ENCODE measurements at regions of chr21 and their contacts with region 1.

Region 1: GRCh38 chr21:42833439-42833815 is 45.9 kb downstream of the WDR4 start:
- DNase-seq: peak; percentile 74
- ATAC-seq: peak; percentile 81
- H3K4me3 ChIP-seq: no peak overlapping the region
- H3K27ac ChIP-seq: no peak overlapping the region
- H3K4me1 ChIP-seq: no peaks in the 10 kb centered on the region
- H3K27me3 ChIP-seq: no peaks in the 10 kb centered on the region; the same call in 1 of the 2 replicates
- CTCF ChIP-seq: peak; percentile 68

Region 2: GRCh38 chr21:42593007-42593806 is 240.2 kb before region 1 on chr21:
- CTCF ChIA-PET with region 1: no interaction called
- POLR2A ChIA-PET with region 1: no interaction called
- intact Hi-C with region 1: loop called (anchors 2 kb)
- DNase-seq: peak; percentile 77
- ATAC-seq: peak; percentile 99
- H3K4me3 ChIP-seq: peak overlapping the region; percentile 51; the same call in 1 of the 2 replicates
- H3K27ac ChIP-seq: no peak overlapping the region
- H3K4me1 ChIP-seq: peaks cover 4% of the 10 kb centered on the region; the same call in 1 of the 2 replicates
- H3K27me3 ChIP-seq: peaks cover 11% of the 10 kb centered on the region; the same call in 1 of the 2 replicates
- CTCF ChIP-seq: peak; percentile 79

Measured in PC-3 (cell line).